ENCODE measurements at regions of chr6 and their contacts with region 1.

Region 1: DNA sequence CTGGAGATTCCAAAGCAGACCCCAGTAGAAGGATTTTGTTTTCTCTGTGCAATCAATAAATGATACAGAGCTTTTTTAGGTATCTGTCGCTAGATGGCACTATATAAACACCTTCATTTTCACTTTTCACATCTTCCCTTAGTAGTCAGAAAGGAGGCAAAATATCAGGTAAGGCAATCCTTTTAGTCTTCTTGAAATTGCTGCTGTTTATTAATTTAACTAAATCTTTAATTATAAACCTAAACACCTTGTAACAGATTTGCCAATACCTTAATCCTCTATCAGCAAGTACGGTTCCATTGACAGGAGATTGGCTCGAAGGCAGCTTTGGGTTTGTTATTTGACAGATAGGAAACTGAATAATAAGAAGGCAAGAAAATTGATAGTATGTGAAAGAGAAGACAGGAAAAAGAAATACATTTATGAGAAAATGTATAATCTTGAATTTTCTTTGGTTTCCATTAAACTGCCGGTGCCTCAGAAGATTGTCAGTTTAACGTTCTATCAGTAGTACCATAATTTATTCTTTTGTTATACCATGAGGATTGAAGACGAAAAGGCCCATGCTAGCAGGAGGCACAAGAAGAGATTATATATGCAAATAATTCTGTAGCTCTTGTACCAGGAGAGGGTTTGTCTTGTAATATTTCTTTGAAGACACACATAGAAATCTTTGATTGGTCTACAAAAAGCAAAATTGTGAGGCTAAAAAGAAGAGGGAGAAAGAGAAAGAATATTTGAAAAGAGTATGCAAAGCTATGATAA is 23.5 kb upstream of the IBTK start:
- DNase-seq: no peak
- ATAC-seq: no peak
- H3K4me3 ChIP-seq: no peak overlapping the region
- H3K27ac ChIP-seq: no peak overlapping the region
- H3K4me1 ChIP-seq: no peaks in the 10 kb centered on the region
- H3K27me3 ChIP-seq: no peaks in the 10 kb centered on the region

Region 2: GRCh38 chr6:82589509-82590206 is 318.6 kb after region 1 on chr6:
- intact Hi-C with region 1: loop called in 1 of 2 experiments (anchors 5 kb)
- DNase-seq: no peak
- ATAC-seq: no peak
- H3K4me3 ChIP-seq: no peak overlapping the region
- H3K27ac ChIP-seq: no peak overlapping the region
- H3K4me1 ChIP-seq: no peaks in the 10 kb centered on the region
- H3K27me3 ChIP-seq: no peaks in the 10 kb centered on the region

Region 3: DNA sequence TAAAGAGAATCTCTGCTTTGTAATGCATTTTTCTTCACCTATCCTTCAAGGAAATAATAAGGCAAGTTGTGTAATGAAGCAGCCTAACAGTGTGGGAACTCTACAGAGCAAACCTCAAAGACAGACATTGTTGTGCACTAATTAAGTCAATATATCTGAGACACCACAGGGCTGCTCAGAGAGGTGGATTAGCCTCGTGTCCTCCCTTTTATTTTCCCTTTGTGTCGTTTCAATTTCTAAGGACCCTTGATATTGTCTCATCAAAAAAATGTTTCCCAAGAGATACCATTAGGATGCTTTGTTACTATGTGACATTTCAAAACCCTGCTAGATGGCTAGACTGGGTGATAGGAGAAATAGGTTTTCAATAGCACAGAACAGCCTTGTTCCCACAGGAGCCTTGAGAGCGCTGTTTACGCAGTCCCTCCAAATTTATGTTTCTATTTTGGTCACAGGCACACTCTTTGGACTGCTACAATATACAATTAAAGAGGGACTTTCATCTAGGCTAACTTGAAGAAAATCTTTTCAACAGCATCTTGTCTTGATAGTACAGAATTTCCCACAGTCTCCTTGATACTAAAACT is 771.5 kb after region 1 on chr6:
- intact Hi-C with region 1: loop called in 1 of 2 experiments (anchors 5 kb)
- DNase-seq: no peak
- ATAC-seq: no peak
- H3K4me3 ChIP-seq: no peak overlapping the region
- H3K27ac ChIP-seq: no peak overlapping the region
- H3K4me1 ChIP-seq: no peaks in the 10 kb centered on the region
- H3K27me3 ChIP-seq: no peaks in the 10 kb centered on the region

Region 4: DNA sequence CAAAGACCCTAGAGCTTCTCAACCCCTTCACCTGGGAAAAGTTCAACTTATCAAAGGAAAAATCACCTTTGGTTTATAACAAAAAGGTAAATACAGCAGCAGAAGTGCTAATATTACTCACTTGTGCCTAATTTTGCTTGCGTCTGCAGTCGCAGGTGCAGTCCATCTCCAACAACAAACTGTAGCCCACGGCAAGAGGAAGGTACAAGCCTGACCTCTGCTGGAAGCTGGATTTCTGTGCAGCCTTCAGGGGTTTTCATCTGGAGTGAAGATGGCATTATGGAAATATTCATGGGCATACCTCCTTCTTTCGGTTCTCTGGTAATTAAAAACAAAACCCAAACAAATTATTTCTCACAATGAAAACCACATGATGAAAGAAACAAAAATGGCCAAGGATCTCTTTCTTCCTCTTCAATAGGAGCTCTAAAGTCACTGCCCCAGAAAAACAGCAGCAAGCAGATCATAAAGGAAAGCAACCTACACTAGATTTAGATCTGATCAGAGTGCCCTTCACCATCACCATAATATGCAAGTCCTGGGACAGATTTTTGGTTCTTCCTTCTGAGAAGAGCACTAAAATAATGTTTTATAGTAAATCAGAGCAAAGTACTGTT is 786.8 kb after region 1 on chr6:
- intact Hi-C with region 1: loop called (anchors 2 to 5 kb)
- DNase-seq: no peak
- ATAC-seq: no peak
- H3K4me3 ChIP-seq: no peak overlapping the region
- H3K27ac ChIP-seq: no peak overlapping the region
- H3K4me1 ChIP-seq: no peaks in the 10 kb centered on the region
- H3K27me3 ChIP-seq: no peaks in the 10 kb centered on the region

Measured in aorta (tissue), 5 donors.